ENCODE measurements at regions of chr10 and their contacts with region 1.

Region 1: DNA sequence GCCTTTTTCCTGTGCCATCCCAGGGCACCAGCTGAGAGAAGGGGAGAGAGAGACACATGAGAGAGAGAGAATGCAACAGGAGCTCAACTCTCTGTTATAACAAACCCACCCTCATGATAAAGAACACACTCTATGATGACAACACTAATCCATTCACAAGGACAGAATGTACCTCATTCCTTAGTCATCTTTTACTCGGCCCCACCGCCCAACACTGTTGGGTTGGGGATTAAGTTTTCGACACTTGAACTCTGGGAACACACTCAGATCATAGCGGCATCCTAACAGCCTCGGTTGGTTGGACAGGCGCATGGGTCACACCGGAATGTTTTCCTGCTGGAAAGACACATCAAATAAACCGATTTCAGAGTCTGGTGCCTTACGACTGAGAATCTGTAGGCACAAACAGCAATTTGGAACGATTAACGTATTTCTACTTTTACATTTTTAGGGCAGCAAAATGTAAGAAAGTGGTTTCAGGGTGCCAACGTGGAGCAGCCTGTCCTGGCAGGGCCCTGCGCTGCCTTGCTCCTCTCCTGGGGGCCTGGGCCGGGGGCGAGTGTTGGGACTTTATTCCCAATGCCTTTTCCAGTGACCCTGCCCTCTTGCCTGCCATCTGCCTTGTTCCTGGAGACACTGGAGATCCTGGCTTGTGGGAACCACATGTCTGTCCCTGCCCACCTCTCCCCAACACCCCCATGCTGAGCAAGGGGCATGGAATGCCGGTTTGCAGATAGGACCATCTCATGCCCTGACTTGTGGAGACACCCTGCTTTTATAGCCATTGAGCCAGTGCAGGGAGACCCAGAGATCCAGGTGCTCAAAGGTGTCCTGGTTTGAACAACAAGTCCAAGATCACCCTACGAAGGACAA is 287.0 kb downstream of the TCERG1L start:
- DNase-seq: no peak
- ATAC-seq: no peak
- H3K4me3 Mint-ChIP-seq: no peak overlapping the region
- H3K27ac Mint-ChIP-seq: no peak overlapping the region
- H3K4me1 Mint-ChIP-seq: no peaks in the 10 kb centered on the region
- H3K27me3 Mint-ChIP-seq: peaks cover 16% of the 10 kb centered on the region
- CTCF ChIP-seq: no peak

Region 2: DNA sequence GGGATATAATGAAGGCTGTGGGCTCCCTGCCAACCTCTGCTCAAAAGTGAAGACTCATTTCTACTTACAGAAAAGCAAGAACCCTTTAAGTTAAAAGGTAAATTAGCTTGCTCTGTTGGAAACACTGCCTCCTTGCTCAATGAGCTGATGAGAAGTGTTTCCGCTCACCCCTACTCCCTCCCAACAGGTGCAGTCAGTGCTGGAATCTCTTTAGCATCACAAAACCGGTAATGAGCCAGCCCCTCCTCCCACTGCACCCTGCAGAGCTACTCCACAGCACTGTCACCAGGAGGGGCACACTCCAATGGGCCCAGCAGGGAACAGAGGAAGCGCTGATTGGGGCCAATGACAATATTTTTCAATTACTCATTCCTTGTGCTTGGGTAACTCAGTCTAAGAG is 24.5 kb after region 1 on chr10:
- CTCF ChIA-PET with region 1: no interaction called
- POLR2A ChIA-PET with region 1: no interaction called
- DNase-seq: peak; percentile 34
- ATAC-seq: peak; percentile 97
- H3K4me3 Mint-ChIP-seq: no peak overlapping the region
- H3K27ac Mint-ChIP-seq: no peak overlapping the region
- H3K4me1 Mint-ChIP-seq: peaks cover 20% of the 10 kb centered on the region
- H3K27me3 Mint-ChIP-seq: peaks cover 24% of the 10 kb centered on the region
- CTCF ChIP-seq: no peak

Region 3: GRCh38 chr10:131453594-131454355 is 429.3 kb after region 1 on chr10:
- CTCF ChIA-PET with region 1: no interaction called
- POLR2A ChIA-PET with region 1: interaction called, 15 read pairs
- DNase-seq: peak; percentile 81
- ATAC-seq: peak; percentile 85
- H3K4me3 Mint-ChIP-seq: peak overlapping the region; percentile 48
- H3K27ac Mint-ChIP-seq: no peak overlapping the region
- H3K4me1 Mint-ChIP-seq: 0 out of 2 replicates have a peak, but pooled peaks cover 10% of the 10 kb centered on the region
- H3K27me3 Mint-ChIP-seq: peaks cover 6% of the 10 kb centered on the region
- CTCF ChIP-seq: peak; percentile 86

Measured in WTC11 (cell line).